ENCODE measurements at regions of chr19 and their contacts with region 1.

Region 1: GRCh38 chr19:51570962-51571575 is at the start of gene ZNF175:
- DNase-seq: peak; percentile 97
- H3K4me3 ChIP-seq: peak within 1 kb of the TSS; percentile 70
- H3K27ac ChIP-seq: peak within 1 kb of the TSS; percentile 72
- H3K4me1 ChIP-seq: peaks cover 3% of the 10 kb centered on the region
- H3K27me3 ChIP-seq: peaks cover 34% of the 10 kb centered on the region
- CTCF ChIP-seq: no peak
- total RNA-seq, gene ZNF175: 10.4 and 15.1 TPM in 2 replicates

Region 2: GRCh38 chr19:50428772-50429463 is 1142.2 kb before region 1 on chr19:
- CTCF ChIA-PET with region 1: no interaction called
- POLR2A ChIA-PET with region 1: interaction called, 14 read pairs
- intact Hi-C with region 1: no loop called
- DNase-seq: no peak
- H3K4me3 ChIP-seq: no peak overlapping the region
- H3K27ac ChIP-seq: no peak overlapping the region
- H3K4me1 ChIP-seq: peaks cover 21% of the 10 kb centered on the region
- H3K27me3 ChIP-seq: no peaks in the 10 kb centered on the region
- CTCF ChIP-seq: no peak

Region 3: DNA sequence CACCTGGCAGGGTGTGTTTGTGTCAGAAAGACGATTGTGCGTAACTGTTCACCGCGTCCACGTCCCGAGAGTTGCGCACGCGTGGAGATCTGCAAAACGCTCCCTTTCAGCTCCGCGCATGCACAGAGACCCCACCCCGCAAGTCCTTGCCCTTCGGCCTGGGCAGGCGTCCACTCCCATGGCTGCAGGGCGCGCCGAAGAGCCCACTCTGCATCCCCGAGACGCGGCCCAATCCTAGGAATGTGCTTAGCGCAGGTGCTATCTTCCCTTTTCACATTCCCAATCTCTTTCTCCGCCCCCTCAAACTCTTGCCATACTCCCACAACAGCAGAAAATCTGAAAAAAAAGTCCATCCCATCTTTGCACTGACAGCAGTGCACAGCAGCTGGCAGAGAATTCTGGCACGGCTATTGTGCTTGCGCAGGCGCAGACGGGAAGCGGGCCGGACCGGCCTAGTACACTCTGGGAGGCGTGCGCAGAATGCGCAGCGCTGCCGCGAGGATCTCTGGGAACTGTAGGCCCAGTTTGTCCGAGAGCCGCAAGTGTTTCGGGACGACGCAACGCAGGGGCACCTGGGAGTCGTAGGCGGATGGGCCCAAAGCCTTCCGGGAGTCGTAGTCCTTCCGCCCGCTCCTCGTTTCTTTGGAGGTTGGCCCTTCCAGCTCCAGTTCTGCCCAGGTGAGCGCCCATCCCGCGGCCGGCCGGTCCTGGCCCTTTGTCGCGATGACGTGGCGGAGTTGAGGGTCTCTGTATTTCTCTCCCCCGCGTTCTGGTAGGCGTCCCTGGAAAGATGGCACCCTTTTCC is 23.1 kb after region 1 on chr19:
- CTCF ChIA-PET with region 1: no interaction called
- POLR2A ChIA-PET with region 1: no interaction called
- intact Hi-C with region 1: loop called (anchors 2 kb)
- DNase-seq: peak; percentile 98
- H3K4me3 ChIP-seq: peak overlapping the region; percentile 59
- H3K27ac ChIP-seq: peak overlapping the region; percentile 18
- H3K4me1 ChIP-seq: no peaks in the 10 kb centered on the region
- H3K27me3 ChIP-seq: no peaks in the 10 kb centered on the region
- CTCF ChIP-seq: no peak

Region 4: GRCh38 chr19:51688672-51689571 is 117.9 kb after region 1 on chr19:
- CTCF ChIA-PET with region 1: no interaction called
- POLR2A ChIA-PET with region 1: interaction called, 11 read pairs
- intact Hi-C with region 1: no loop called
- DNase-seq: peak; percentile 94
- H3K4me3 ChIP-seq: peak overlapping the region; percentile 86
- H3K27ac ChIP-seq: peak overlapping the region; percentile 83
- H3K4me1 ChIP-seq: peaks cover 21% of the 10 kb centered on the region
- H3K27me3 ChIP-seq: no peaks in the 10 kb centered on the region
- CTCF ChIP-seq: no peak